Left lung (tissue), 14 donors: ENCODE measurements at regions of chr10 and their contacts with region 1.

Region 1: GRCh38 chr10:87734987-87735827 is 75.5 kb downstream of the PAPSS2 start:
- DNase-seq: peak in 2 of 4 donors; percentile 65 to 67
- ATAC-seq: peak; percentile 82
- H3K4me3 ChIP-seq: no peak overlapping the region
- H3K27ac ChIP-seq: peak overlapping the region in 1 of 2 donors; percentile 34
- H3K4me1 ChIP-seq: peaks cover 0 to 23% of the 10 kb centered on the region in 2 donors
- H3K27me3 ChIP-seq: no peaks in the 10 kb centered on the region
- CTCF ChIP-seq: peak; percentile 62 to 74

Region 2: DNA sequence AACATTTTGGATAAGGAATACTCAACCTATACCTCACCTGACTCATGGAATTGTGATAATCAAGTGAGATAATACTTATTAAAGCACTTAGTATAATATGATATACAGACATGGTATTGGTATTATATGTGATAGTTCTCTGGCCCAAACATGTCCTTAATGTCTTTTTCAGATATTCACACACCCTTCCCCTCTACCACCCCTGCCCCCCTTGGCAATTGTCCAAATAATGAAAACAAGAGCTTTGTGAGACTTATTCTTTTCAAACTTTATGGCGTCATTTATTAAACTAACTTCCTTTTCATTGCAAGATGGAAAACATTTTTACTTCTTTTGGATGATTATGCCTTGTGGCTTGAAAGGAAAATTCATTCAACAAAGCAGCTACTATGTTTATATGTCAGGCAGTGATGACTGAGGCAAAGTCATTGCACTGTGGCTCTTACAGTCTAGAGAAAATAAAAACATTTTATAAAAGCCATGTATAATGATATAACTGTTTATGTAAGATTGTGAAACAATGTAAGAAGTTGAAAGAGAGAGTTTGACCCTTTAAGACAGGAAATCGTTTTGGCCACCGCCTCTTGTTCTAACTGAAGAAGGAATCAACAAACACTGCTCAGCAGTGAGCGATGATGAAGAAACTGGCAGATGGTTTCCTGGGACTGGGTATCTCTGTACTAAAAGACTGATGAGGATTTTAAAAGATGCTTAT is 203.1 kb before region 1 on chr10:
- intact Hi-C with region 1: loop called in 1 of 2 experiments (anchors 10 kb)
- DNase-seq: peak in 2 of 4 donors; percentile 60 to 80
- ATAC-seq: peak; percentile 73
- H3K4me3 ChIP-seq: no peak overlapping the region
- H3K27ac ChIP-seq: peak overlapping the region; percentile 26 to 45
- H3K4me1 ChIP-seq: peaks cover 12 to 29% of the 10 kb centered on the region in 2 donors
- H3K27me3 ChIP-seq: no peaks in the 10 kb centered on the region
- CTCF ChIP-seq: no peak

Region 3: DNA sequence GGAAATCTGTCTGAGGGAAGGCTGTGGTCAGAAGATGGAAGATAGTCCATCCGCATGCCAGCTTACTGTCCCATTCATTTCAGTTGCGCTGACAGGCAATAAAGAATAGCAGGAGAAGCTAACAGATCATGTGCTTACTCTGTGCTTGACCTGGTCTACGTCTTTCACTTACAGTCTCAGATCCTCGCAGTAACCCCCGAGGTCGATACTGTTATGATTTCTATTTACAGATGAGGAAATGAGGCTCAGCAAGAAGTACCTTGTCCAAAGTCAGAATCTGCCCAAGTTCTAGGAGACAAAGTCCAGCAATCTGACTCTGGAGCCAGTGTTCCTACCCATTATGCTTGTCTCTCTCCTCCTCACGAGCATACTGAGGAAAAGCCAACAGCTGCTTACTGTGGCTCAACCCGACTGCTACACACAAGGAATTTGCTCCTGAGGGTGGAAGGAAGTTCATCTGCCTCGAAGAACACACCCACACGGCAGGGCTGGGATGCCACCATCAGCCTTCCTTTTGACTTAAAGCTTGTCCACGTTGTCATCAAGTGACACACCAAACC is 156.3 kb before region 1 on chr10:
- intact Hi-C with region 1: no loop called
- DNase-seq: peak in 1 of 4 donors; percentile 32
- ATAC-seq: peak; percentile 32
- H3K4me3 ChIP-seq: no peak overlapping the region
- H3K27ac ChIP-seq: no peak overlapping the region
- H3K4me1 ChIP-seq: no peaks in the 10 kb centered on the region
- H3K27me3 ChIP-seq: no peaks in the 10 kb centered on the region
- CTCF ChIP-seq: no peak

Region 4: GRCh38 chr10:87659571-87660483 is 75.4 kb before region 1 on chr10 and contains the start of gene PAPSS2:
- intact Hi-C with region 1: loop called in 1 of 2 experiments (anchors 5 kb)
- DNase-seq: peak; percentile 63 to 93 (median 79)
- ATAC-seq: peak; percentile 82
- H3K4me3 ChIP-seq: peak within 1 kb of the TSS; percentile 63 to 74
- H3K27ac ChIP-seq: peak within 1 kb of the TSS; percentile 89
- H3K4me1 ChIP-seq: peaks cover 0 to 41% of the 10 kb centered on the region in 2 donors
- H3K27me3 ChIP-seq: peaks cover 0 to 6% of the 10 kb centered on the region in 2 donors
- CTCF ChIP-seq: no peak
- polyA plus RNA-seq, gene PAPSS2: 49.0 to 61.1 (median 56.3) TPM